HepG2 (cell line): ENCODE measurements at regions of chr1 and their contacts with region 1.

Region 1: GRCh38 chr1:61049850-61050540 is 32.4 kb upstream of the NFIA start:
- DNase-seq: peak; percentile 70
- ATAC-seq: peak; percentile 80
- H3K4me3 ChIP-seq: peak overlapping the region; percentile 67 to 80 (median 74)
- H3K27ac ChIP-seq: peak overlapping the region; percentile 47
- H3K4me1 ChIP-seq: peaks cover 27% of the 10 kb centered on the region
- H3K27me3 ChIP-seq: peaks cover 2 to 32% of the 10 kb centered on the region in 2 experiments; a peak in 4 of 5 replicates
- CTCF ChIP-seq: peak; percentile 97
- EP300 ChIP-seq: no peak
- POLR2A ChIP-seq: no peak
- RAD21 ChIP-seq: peak; percentile 84

Region 2: DNA sequence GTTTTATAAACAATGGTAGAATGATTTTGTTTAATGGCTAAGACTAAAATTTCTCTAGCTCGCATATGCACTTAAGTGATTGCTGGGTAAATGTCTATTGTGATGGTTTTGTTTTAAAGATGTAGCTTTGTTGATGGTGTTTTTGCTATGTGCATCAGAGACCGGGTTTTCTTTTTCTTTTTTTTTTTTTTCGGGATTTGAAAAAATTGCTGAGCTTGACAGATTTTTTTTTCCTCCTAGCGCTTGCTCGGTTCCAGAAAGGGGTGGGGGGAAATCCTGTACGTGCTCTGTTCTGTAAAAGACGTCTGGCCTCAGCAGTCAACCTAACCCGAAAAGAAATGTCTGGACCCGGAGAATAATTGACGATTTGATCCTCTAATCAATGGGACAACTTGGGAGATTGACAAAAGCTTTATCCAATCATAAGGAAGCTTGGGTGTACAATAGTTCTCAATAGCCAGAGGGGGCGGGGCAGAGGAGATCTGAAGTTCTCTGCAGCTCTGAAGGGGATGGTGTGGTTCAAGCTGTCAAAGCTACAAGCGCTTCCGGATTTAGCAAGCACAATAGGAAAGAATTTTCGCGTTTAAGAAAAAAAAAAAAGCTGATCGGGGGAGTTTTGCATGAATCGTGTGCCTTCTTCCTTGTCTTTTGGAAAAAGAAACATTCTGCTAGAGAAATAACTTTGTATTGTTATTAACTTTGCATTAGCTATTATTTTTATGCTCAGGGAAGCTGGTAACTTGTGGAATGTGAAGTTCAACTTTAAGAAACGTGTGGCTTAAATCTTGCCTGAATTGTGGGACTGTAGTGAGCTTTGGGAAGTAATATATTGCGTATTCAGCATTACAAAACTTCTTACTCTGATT is 27.9 kb after region 1 on chr1:
- CTCF ChIA-PET with region 1: no interaction called
- POLR2A ChIA-PET with region 1: interaction called, 11 read pairs
- in situ Hi-C with region 1: no loop called
- intact Hi-C with region 1: no loop called
- DNase-seq: peak; percentile 99
- ATAC-seq: peak; percentile 51
- H3K4me3 ChIP-seq: peak overlapping the region; percentile 72 to 92 (median 80)
- H3K27ac ChIP-seq: peak overlapping the region; percentile 90
- H3K4me1 ChIP-seq: peaks cover 43% of the 10 kb centered on the region
- H3K27me3 ChIP-seq: no peaks in the 10 kb centered on the region; a peak in 1 of 5 replicates
- CTCF ChIP-seq: no peak
- EP300 ChIP-seq: no peak
- POLR2A ChIP-seq: no peak
- RAD21 ChIP-seq: no peak

Region 3: GRCh38 chr1:61111084-61111788 is 61.2 kb after region 1 on chr1:
- CTCF ChIA-PET with region 1: no interaction called
- POLR2A ChIA-PET with region 1: no interaction called
- in situ Hi-C with region 1: no loop called
- intact Hi-C with region 1: loop called (anchors 5 kb)
- DNase-seq: no peak
- ATAC-seq: no peak
- H3K4me3 ChIP-seq: no peak overlapping the region
- H3K27ac ChIP-seq: no peak overlapping the region
- H3K4me1 ChIP-seq: peaks cover 69% of the 10 kb centered on the region
- H3K27me3 ChIP-seq: no peaks in the 10 kb centered on the region; a peak in 1 of 5 replicates
- CTCF ChIP-seq: no peak
- EP300 ChIP-seq: no peak
- POLR2A ChIP-seq: no peak
- RAD21 ChIP-seq: no peak

Region 4: DNA sequence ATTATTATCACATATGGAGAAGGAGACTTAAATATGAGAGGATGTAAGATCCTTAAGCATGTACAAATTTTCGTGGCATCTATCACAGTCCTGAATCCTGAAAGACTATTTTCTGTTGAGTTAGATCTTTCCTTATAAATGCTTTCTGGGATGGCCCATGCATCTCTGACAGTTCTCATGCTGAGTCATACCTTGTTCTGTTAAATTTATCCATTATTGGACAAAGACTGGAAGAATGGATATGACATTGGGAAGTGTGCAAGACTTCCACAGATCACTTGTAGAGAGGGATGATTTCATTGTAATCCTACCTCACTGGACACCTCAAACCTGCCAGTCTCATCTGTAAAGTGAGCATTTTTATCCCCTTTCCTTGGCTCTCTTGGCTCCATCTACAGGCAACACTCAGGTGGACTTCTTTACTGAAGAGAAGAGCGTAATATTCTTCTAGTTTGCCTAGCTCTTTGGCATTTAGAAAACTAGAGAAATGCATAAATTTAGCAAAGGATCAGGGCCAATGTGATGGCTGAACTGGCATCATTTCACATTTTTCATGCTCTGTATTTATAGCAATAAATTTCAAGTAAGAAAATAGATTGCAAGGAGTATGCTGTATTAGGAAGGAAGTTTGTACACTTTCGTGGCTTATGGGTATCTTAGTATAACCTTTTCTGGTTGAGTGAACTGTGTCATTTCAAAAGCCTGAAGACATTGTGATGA is 160.6 kb after region 1 on chr1:
- CTCF ChIA-PET with region 1: no interaction called
- POLR2A ChIA-PET with region 1: no interaction called
- in situ Hi-C with region 1: no loop called
- intact Hi-C with region 1: loop called (anchors 10 kb)
- DNase-seq: peak; percentile 24
- ATAC-seq: peak; percentile 39; the same call in 2 of the 3 replicates
- H3K4me3 ChIP-seq: no peak overlapping the region
- H3K27ac ChIP-seq: no peak overlapping the region
- H3K4me1 ChIP-seq: peaks cover 47% of the 10 kb centered on the region
- H3K27me3 ChIP-seq: no peaks in the 10 kb centered on the region
- CTCF ChIP-seq: peak; percentile 42
- EP300 ChIP-seq: no peak
- POLR2A ChIP-seq: no peak
- RAD21 ChIP-seq: no peak

Region 5: DNA sequence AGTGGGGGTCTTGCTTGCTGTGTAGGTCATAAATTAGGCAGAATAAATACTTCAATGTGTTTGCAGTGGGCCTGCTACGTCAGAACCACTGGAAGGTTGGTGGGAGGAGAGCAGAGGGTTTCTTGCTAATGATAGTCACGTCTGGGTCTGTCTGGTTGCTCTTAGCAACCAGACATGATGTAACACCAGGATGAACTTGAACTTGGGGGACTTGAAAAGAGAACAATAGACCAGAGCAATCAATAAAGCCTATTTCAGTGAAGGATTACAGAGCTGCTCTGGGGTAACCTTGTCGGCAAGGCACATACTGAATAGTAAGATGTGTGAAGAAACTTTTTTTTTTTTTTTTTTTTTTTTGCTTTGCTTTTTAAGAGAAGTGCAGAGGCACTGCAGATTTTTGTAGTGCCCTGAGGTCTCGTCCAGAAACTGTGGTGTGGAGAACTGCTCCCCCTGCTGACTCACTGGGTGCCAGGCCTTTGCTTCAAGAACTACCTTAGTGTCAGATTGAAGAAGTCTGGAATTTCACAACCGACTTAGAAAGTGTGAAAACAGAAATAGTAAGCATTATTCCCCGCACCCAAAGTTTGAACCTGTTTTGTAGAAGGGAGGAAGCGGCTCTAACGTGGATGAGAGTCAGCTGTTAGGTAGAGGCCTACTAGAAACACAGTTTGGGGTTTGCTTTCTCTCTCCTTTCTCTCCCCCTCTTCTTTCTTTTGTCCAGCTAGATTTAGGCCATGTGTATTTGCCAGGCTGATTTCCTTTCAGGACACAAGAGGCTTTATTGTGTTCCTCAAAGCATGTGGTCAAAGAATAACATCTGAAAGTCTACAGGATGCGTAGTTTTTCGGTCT is 403.3 kb after region 1 on chr1:
- CTCF ChIA-PET with region 1: no interaction called
- POLR2A ChIA-PET with region 1: no interaction called
- in situ Hi-C with region 1: loop called (anchors 5 kb)
- intact Hi-C with region 1: loop called (anchors 1 kb)
- DNase-seq: peak; percentile 92
- ATAC-seq: peak; percentile 74
- H3K4me3 ChIP-seq: no peak overlapping the region
- H3K27ac ChIP-seq: peak overlapping the region; percentile 36
- H3K4me1 ChIP-seq: peaks cover 48% of the 10 kb centered on the region
- H3K27me3 ChIP-seq: no peaks in the 10 kb centered on the region
- CTCF ChIP-seq: peak; percentile 73
- EP300 ChIP-seq: peak in 1 of 2 experiments; percentile 35; a peak in 1 of 4 replicates
- POLR2A ChIP-seq: peak; percentile 27 to 31; a peak in 1 of 4 replicates
- RAD21 ChIP-seq: 0 out of 2 replicates have a peak, but pooled peaks have one; percentile 41